ENCODE measurements at regions of chr18 and their contacts with region 1.

Region 1: GRCh38 chr18:30971338-30971956 is 71.1 kb downstream of the DSC3 start:
- DNase-seq: peak; percentile 52
- H3K4me3 Mint-ChIP-seq: no peak overlapping the region
- H3K27ac Mint-ChIP-seq: no peak overlapping the region
- H3K4me1 Mint-ChIP-seq: no peaks in the 10 kb centered on the region
- H3K27me3 Mint-ChIP-seq: no peaks in the 10 kb centered on the region
- CTCF ChIP-seq: peak; percentile 36

Region 2: DNA sequence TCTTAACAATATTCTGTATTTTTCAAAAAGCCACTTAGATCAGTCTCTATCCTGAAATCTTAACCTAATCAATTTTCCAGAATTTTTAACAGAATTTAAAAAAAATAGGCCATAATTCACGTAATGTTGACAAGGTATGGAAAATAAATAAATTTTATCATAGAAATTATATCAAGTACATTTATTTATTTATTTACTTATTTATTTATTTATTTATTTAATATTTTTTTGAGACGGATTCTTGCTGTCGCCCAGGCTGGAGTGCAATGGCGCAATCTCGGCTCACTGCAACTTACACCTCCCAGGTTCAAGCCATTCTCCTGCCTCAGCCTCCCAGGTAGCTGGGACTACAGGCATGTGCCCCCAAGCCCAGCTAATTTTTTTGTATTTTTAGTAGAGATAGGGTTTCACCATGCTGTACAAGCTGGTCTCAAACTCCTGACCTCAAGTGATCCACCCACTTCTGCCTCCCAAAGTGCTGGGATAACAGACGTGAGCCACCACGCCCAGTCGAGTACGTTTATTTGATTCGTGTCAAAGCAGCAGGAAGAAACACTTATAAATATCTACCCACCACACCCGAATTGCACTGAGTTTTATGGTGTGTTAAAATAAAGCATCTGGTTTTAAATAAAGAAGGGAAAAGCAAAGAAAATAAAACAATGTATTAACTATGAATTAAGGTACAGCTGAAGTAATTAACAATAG is 11.0 kb after region 1 on chr18:
- CTCF ChIA-PET with region 1: interaction called, 32 read pairs
- POLR2A ChIA-PET with region 1: interaction called, 6 read pairs
- intact Hi-C with region 1: no loop called
- DNase-seq: no peak
- H3K4me3 Mint-ChIP-seq: no peak overlapping the region
- H3K27ac Mint-ChIP-seq: no peak overlapping the region
- H3K4me1 Mint-ChIP-seq: peaks cover 8% of the 10 kb centered on the region
- H3K27me3 Mint-ChIP-seq: no peaks in the 10 kb centered on the region
- CTCF ChIP-seq: no peak

Region 3: GRCh38 chr18:31230495-31230894 is 259.0 kb after region 1 on chr18:
- CTCF ChIA-PET with region 1: no interaction called
- POLR2A ChIA-PET with region 1: no interaction called
- intact Hi-C with region 1: no loop called
- DNase-seq: peak; percentile 86
- H3K4me3 Mint-ChIP-seq: no peak overlapping the region
- H3K27ac Mint-ChIP-seq: peak overlapping the region; percentile 54
- H3K4me1 Mint-ChIP-seq: peaks cover 24% of the 10 kb centered on the region
- H3K27me3 Mint-ChIP-seq: no peaks in the 10 kb centered on the region
- CTCF ChIP-seq: no peak